GM10248 (cell line): ENCODE measurements at regions of chr2 and their contacts with region 1.

Region 1: DNA sequence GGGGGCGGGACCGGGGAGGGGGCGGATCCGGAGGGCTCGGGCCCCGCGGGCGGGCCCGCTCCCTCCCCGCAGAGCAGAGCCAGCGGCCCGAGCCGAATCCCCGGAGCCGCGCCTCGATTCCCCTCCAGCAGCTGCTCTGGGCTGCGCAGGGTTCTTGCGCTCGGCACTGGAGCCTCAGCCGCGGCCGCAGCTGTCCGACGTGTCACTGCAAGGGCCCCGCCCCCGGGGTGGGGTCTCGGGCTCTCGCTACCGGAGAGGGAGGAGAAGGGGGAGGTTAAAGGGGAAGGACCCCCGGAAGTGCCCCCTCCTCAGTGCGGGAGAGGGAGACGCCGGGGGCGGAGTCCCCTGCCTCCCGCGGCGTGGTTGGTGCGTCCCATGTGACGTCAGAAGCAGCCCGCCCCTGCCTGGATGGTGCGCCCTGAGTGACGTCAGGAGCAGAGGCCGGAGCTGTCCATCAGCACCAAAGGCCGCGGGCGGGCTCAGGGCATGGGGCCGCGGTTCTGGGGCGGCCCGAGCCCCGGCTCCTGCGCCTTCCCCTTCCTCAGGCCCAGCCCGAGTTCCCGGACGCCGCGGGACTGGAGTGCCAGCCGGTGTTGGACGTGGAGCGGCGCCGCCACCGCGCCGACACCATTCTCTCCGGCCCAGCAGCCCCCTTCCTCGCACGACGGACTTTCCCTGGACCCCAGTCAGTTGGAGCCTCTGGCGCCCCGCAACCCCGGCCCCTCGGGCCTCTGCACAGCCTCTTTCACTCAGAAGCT is at the starts of genes CHPF and TMEM198:
- DNase-seq: peak; percentile 99
- CTCF ChIP-seq: no peak

Region 2: DNA sequence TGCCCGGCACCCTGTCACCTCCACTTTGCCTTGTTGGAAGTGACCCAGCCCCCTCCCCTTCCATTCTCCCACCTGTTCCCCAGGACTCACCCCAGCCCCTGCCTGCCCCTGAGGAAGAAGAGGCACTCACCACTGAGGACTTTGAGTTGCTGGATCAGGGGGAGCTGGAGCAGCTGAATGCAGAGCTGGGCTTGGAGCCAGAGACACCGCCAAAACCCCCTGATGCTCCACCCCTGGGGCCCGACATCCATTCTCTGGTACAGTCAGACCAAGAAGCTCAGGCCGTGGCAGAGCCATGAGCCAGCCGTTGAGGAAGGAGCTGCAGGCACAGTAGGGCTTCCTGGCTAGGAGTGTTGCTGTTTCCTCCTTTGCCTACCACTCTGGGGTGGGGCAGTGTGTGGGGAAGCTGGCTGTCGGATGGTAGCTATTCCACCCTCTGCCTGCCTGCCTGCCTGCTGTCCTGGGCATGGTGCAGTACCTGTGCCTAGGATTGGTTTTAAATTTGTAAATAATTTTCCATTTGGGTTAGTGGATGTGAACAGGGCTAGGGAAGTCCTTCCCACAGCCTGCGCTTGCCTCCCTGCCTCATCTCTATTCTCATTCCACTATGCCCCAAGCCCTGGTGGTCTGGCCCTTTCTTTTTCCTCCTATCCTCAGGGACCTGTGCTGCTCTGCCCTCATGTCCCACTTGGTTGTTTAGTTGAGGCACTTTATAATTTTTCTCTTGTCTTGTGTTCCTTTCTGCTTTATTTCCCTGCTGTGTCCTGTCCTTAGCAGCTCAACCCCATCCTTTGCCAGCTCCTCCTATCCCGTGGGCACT is 361.2 kb before region 1 on chr2:
- CTCF ChIA-PET with region 1: no interaction called
- POLR2A ChIA-PET with region 1: no interaction called
- DNase-seq: no peak
- CTCF ChIP-seq: no peak

Region 3: GRCh38 chr2:219498280-219499057 is 45.3 kb before region 1 on chr2 and contains the start of gene GMPPA:
- CTCF ChIA-PET with region 1: interaction called, 24 read pairs
- POLR2A ChIA-PET with region 1: no interaction called
- DNase-seq: peak; percentile 98
- CTCF ChIP-seq: no peak

Region 4: DNA sequence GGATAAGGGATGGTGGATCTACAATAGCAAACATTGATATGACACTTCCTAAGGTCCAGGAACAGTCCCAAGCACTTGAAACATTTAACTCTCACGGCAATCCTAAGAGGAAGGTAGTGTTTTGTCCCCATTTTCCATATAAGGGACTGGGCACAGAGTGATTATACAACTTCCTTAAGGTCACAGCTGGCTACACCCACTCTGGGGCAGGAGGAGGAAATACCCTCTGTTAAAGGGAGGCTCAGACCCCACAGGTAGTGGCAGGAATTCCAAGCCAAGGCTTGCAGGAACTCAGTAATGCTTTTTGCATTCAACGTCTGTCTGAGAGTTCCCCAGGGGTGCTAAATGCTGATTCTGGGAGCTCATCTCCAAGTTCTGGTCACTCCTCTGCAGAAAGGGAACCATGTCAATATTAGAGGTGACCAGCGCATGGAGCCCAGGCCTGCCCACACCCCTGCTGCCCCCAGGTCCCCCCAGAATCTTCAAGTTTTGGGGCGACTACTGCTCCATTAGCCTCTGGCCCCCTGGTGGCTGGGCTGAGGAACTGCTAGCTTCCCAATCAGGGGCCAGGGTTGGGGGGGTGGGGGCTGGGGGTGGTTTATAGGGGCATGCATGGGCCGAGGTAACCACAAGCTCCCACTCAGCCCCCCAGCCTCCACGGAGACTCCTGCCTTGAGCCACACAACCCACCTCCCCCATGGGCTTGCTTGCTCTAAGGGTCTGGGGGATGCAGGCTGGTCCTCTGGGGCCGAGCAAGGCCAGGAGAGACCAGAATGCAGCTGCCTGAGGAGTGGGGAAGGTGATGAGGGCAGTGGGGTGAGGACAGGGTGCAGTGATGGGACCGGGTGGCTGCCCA is 16.5 kb after region 1 on chr2:
- CTCF ChIA-PET with region 1: interaction called, 66 read pairs
- POLR2A ChIA-PET with region 1: no interaction called
- DNase-seq: peak; percentile 74
- CTCF ChIP-seq: peak; percentile 61

Region 5: GRCh38 chr2:219621935-219622334 is 78.2 kb after region 1 on chr2:
- CTCF ChIA-PET with region 1: interaction called, 11 read pairs
- POLR2A ChIA-PET with region 1: no interaction called
- DNase-seq: no peak
- CTCF ChIP-seq: no peak

Region 6: GRCh38 chr2:219642465-219643080 is 98.8 kb after region 1 on chr2:
- CTCF ChIA-PET with region 1: interaction called, 116 read pairs
- POLR2A ChIA-PET with region 1: no interaction called
- DNase-seq: peak; percentile 94
- CTCF ChIP-seq: peak; percentile 100

Region 7: DNA sequence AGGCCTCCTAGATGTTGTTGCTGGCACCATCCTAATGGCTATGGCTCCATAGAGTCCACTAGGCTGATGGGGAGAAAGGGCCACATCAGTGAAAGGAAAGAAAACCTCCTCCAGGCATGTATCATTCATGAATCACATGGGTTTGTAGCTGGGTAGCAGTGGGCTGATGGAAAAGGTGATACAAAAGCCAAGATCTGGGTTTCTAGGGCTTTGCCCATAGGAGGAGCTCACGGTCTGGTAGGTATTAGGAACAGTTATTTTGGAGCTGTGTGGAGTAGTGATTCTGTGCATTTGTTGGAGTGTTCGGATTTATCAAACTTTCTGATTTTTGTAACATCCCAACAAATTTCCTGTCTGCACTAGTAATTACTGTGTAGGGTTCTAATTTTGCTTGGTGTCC is 342.8 kb after region 1 on chr2:
- CTCF ChIA-PET with region 1: no interaction called
- POLR2A ChIA-PET with region 1: no interaction called
- DNase-seq: no peak
- CTCF ChIP-seq: no peak